ENCODE measurements at regions of chr4 and their contacts with region 1.

Region 1: DNA sequence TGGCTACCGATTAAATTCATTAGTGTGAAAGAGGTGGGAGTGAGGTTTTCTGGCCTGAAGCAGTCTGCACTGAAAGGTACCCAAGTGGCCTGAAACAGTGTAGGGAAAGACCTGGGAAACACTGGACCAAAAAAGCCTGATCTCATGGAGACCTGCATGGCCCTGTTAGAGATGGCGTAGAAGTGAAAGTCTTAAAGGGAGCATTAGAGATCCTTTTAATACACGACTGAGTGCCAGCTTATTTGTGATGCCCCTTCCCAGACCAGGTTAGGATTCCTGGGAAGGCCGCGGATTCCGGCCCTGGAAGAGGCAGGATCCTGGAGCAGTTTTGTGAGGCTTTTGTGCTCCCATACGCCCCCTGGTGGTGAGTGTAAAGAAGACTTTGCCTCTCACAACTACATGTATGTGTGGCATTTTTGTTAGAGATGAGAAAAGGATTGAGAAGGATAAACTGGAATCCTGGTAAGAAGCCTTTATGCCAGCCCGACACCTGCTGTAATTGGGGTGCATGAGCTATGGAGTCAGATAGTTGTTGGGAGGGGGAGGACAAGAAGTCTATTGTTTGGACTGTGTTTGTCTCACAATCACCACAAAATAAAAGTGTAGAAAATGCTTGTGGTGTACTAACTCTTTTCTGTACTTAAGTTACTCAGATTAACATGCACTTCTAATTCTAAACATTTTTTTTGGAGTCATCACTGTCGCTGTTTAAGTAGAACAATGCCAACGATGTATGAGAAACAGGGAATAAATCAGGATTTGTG is 54.0 kb downstream of the JADE1 start:
- DNase-seq: peak; percentile 69
- H3K4me3 Mint-ChIP-seq: no peak overlapping the region
- H3K27ac Mint-ChIP-seq: peak overlapping the region; percentile 83
- H3K4me1 Mint-ChIP-seq: peaks cover 46% of the 10 kb centered on the region
- H3K27me3 Mint-ChIP-seq: no peaks in the 10 kb centered on the region

Region 2: GRCh38 chr4:128191115-128191781 is 672.2 kb before region 1 on chr4:
- CTCF ChIA-PET with region 1: interaction called, 3 read pairs
- POLR2A ChIA-PET with region 1: no interaction called
- intact Hi-C with region 1: loop called (anchors 1 kb)
- DNase-seq: peak; percentile 80
- H3K4me3 Mint-ChIP-seq: no peak overlapping the region
- H3K27ac Mint-ChIP-seq: no peak overlapping the region
- H3K4me1 Mint-ChIP-seq: peaks cover 3% of the 10 kb centered on the region
- H3K27me3 Mint-ChIP-seq: no peaks in the 10 kb centered on the region

Region 3: GRCh38 chr4:128454281-128455075 is 409.0 kb before region 1 on chr4:
- CTCF ChIA-PET with region 1: interaction called, 7 read pairs
- POLR2A ChIA-PET with region 1: no interaction called
- intact Hi-C with region 1: loop called (anchors 1 kb)
- DNase-seq: peak; percentile 79
- H3K4me3 Mint-ChIP-seq: peak overlapping the region; percentile 7
- H3K27ac Mint-ChIP-seq: no peak overlapping the region
- H3K4me1 Mint-ChIP-seq: peaks cover 9% of the 10 kb centered on the region
- H3K27me3 Mint-ChIP-seq: no peaks in the 10 kb centered on the region

Region 4: DNA sequence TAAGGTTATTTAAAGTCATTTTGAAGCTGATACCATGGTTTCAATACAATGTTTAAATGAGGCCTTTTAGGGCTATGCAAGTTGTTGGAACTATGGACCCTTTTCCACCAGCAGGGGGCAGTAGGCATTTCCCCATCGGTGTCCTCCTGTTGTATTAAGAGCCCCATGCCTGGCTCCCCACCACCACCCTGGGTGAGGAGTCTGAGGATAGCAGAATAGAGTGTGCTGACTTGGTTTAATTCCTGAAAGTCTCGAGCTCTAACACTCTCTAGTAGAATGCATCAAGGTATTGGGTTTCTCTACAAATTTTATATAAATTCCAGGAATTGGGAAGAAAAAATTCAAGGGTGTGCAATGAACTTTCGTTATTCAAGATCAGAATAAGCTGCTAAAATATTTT is 288.8 kb before region 1 on chr4:
- CTCF ChIA-PET with region 1: no interaction called
- POLR2A ChIA-PET with region 1: no interaction called
- intact Hi-C with region 1: loop called (anchors 1 kb)
- DNase-seq: peak; percentile 82
- H3K4me3 Mint-ChIP-seq: no peak overlapping the region
- H3K27ac Mint-ChIP-seq: no peak overlapping the region
- H3K4me1 Mint-ChIP-seq: no peaks in the 10 kb centered on the region
- H3K27me3 Mint-ChIP-seq: peaks cover 4% of the 10 kb centered on the region

Region 5: GRCh38 chr4:128782076-128782715 is 81.3 kb before region 1 on chr4:
- CTCF ChIA-PET with region 1: interaction called, 9 read pairs
- POLR2A ChIA-PET with region 1: no interaction called
- intact Hi-C with region 1: loop called (anchors 1 kb)
- DNase-seq: peak; percentile 61
- H3K4me3 Mint-ChIP-seq: no peak overlapping the region
- H3K27ac Mint-ChIP-seq: no peak overlapping the region
- H3K4me1 Mint-ChIP-seq: no peaks in the 10 kb centered on the region
- H3K27me3 Mint-ChIP-seq: peaks cover 2% of the 10 kb centered on the region

Region 6: GRCh38 chr4:128823025-128823661 is 40.4 kb before region 1 on chr4:
- CTCF ChIA-PET with region 1: interaction called, 6 read pairs
- POLR2A ChIA-PET with region 1: no interaction called
- intact Hi-C with region 1: loop called (anchors 5 kb)
- DNase-seq: no peak
- H3K4me3 Mint-ChIP-seq: no peak overlapping the region
- H3K27ac Mint-ChIP-seq: no peak overlapping the region
- H3K4me1 Mint-ChIP-seq: peaks cover 78% of the 10 kb centered on the region
- H3K27me3 Mint-ChIP-seq: no peaks in the 10 kb centered on the region

Region 7: DNA sequence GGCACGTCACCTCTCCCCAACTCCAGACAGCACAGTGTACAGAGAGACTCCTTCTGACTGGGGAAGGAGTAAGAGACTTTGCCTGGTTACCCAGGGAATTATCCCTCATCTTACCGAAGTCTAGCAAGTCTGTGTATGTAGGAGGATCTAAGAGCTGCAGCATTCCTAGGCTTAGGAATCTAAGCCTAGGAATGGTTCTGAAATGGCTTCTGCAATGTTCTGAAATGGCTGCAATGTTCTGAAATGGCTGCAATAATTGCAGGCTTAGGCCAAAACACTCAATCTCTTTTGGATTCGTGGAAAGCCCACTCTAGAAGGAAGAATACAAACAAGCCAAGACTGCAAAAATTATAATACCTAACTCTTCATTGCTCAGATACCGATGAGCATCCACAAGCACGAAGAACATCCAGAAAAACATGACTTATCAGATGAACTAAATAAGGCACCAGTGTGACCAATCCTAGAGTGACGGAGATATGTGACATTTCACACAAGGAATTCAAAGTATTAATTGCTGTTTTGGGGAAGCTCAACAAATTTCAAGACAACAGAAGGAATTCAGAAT is 123.5 kb after region 1 on chr4:
- CTCF ChIA-PET with region 1: no interaction called
- POLR2A ChIA-PET with region 1: no interaction called
- intact Hi-C with region 1: no loop called
- DNase-seq: no peak
- H3K4me3 Mint-ChIP-seq: no peak overlapping the region
- H3K27ac Mint-ChIP-seq: no peak overlapping the region
- H3K4me1 Mint-ChIP-seq: no peaks in the 10 kb centered on the region
- H3K27me3 Mint-ChIP-seq: no peaks in the 10 kb centered on the region